Activated naive CD4-positive, alpha-beta T cell treated with anti-CD3 and anti-CD28 coated beads for 36 hours (primary cell): ENCODE measurements at regions of chr4 and their contacts with region 1.

Region 1: DNA sequence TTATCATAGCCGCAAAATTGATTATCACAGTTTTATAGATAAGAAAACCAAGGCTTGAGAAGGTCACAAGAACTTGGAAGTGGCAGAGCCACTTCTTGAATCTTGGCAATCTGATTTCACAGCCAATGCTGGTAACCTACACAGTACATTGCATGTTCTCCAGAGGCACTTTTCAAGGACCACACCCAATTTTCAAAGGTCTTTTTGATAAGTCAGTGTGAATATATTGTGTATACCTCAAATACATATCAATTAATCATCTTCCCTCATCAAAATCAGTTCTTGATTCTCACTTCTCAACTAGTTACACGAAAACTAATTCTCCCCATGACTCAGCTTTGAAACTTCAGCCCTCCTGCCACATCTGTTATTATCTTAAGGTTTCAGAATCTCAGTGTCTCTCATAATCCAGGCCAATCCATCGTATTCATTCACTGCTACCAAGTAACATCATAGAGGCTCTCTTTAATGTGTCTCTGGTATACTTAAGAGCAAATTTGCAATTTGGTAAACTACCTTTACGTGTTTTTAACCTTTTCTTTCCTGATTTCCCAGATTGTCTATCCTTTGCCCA is 16.8 kb downstream of the CAMK2D start:
- DNase-seq: peak; percentile 25
- H3K4me3 Mint-ChIP-seq: no peak overlapping the region
- H3K27ac Mint-ChIP-seq: no peak overlapping the region
- H3K4me1 Mint-ChIP-seq: peaks cover 29% of the 10 kb centered on the region
- H3K27me3 Mint-ChIP-seq: no peaks in the 10 kb centered on the region

Region 2: DNA sequence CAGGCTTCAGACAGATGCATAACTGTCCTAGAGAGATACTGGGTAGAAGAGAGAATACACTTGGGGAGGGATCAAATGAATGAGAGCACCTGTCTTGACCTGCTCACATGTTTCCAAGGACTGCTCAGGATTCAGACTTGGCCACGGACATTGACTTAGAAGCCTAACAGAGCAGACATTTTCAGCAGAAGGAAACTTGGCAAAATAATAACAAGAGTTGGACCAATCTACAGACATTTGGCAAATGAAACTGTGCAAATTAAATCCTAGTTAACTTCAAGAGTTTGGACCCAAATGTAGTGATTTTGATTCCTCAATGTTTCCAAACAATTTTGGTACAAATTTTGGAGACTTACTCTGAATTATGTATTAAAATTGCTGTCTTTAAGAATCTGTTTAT is 207.1 kb before region 1 on chr4:
- CTCF ChIA-PET with region 1: no interaction called
- intact Hi-C with region 1: no loop called
- DNase-seq: no peak
- H3K4me3 Mint-ChIP-seq: no peak overlapping the region
- H3K27ac Mint-ChIP-seq: no peak overlapping the region
- H3K4me1 Mint-ChIP-seq: peaks cover 33% of the 10 kb centered on the region
- H3K27me3 Mint-ChIP-seq: no peaks in the 10 kb centered on the region

Region 3: GRCh38 chr4:113756005-113756410 is 11.3 kb after region 1 on chr4:
- CTCF ChIA-PET with region 1: no interaction called
- intact Hi-C with region 1: loop called (anchors 1 kb)
- DNase-seq: no peak
- H3K4me3 Mint-ChIP-seq: no peak overlapping the region
- H3K27ac Mint-ChIP-seq: no peak overlapping the region
- H3K4me1 Mint-ChIP-seq: peaks cover 47% of the 10 kb centered on the region
- H3K27me3 Mint-ChIP-seq: no peaks in the 10 kb centered on the region

Region 4: DNA sequence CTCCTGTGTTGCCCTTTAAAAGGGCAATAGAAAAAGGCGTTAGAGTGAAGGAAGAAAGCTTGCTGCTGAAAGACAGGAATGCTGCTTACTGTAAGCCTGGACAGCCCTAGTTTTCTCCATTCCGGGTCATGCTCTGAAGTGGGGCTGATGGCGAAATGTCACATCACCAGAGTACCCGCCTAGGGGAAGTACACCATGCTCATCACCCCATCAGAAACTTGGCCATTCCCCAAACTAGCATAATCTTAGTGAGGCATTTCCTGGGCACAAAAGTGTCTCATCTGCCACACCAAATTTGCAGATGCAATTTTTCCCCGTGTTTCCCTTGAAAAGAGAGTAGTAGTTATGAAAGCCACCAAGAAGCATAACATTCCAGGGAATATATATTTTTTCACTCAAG is 64.6 kb after region 1 on chr4:
- CTCF ChIA-PET with region 1: no interaction called
- intact Hi-C with region 1: no loop called
- DNase-seq: peak; percentile 14
- H3K4me3 Mint-ChIP-seq: no peak overlapping the region
- H3K27ac Mint-ChIP-seq: no peak overlapping the region
- H3K4me1 Mint-ChIP-seq: peaks cover 17% of the 10 kb centered on the region
- H3K27me3 Mint-ChIP-seq: no peaks in the 10 kb centered on the region